K562 (cell line): ENCODE measurements at regions of chr3 and their contacts with region 1.

Region 1: GRCh38 chr3:182490596-182491491 is 302.5 kb upstream of the ATP11B start:
- DNase-seq: peak in 3 of 4 experiments; percentile 11 to 47 (median 20)
- ATAC-seq: peak; percentile 77
- H3K4me3 ChIP-seq: no peak overlapping the region
- H3K27ac ChIP-seq: no peak overlapping the region
- H3K4me1 ChIP-seq: no peaks in the 10 kb centered on the region
- H3K27me3 ChIP-seq: no peaks in the 10 kb centered on the region
- CTCF ChIP-seq: peak; percentile 39 to 54 (median 45); a peak in 4 of 6 replicates
- EP300 ChIP-seq: no peak
- POLR2A ChIP-seq: no peak
- RAD21 ChIP-seq: peak; percentile 66 to 77

Region 2: DNA sequence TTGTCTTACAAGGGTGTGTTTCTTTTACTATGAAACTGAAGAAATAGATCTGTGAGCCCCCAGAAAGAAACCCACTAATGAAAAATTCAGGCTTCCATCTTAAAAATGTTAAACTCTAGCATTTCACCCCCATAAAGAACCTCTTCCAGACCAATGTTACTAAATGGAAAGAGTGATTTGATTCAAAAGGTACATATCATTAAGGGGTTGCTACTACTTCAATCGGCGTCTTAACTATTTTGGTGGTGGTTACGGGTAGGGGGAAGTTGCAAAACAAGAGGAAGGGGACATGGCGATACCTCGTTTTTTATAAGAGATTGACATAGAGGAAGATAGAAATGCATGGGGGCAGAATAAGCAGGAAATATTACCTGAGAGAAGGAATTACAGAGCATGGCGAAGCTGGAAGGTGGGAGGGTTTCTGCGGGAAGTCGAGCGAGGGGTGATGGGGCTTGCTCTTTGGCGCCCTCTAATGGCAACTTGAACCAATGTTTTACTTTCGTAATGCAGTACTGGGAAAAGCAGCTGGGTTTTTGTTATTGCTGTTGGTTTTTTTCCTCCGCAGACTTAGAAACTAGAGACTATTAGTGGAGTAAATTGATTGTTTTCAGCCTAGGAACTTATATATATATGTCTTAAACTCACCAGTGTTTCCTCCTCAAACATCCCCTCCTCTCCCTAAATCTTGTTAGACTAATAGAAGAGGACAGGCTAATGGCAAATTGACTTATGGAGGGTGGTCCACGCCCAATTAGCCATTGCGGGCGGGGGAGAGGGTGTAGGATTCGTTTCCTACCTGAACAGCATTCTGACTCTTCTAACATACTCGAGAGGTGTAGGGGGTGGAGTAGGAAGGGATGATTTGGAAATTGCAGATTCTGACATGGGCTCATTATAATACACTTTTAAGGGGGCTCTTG is 790.4 kb before region 1 on chr3:
- CTCF ChIA-PET with region 1: no interaction called
- POLR2A ChIA-PET with region 1: no interaction called
- in situ Hi-C with region 1: no loop called
- intact Hi-C with region 1: loop called (anchors 10 kb)
- DNase-seq: peak; percentile 72 to 75 (median 73)
- ATAC-seq: peak; percentile 88
- H3K4me3 ChIP-seq: no peak overlapping the region
- H3K27ac ChIP-seq: no peak overlapping the region
- H3K4me1 ChIP-seq: peaks cover 0 to 13% of the 10 kb centered on the region in 2 experiments; a peak in 2 of 5 replicates
- H3K27me3 ChIP-seq: peaks cover 11 to 27% of the 10 kb centered on the region in 2 experiments; a peak in 4 of 5 replicates
- CTCF ChIP-seq: peak; percentile 74 to 80 (median 77)
- EP300 ChIP-seq: no peak
- POLR2A ChIP-seq: no peak
- RAD21 ChIP-seq: peak; percentile 32 to 54; a peak in 3 of 4 replicates

Region 3: GRCh38 chr3:182248351-182248880 is 242.4 kb before region 1 on chr3:
- CTCF ChIA-PET with region 1: no interaction called
- POLR2A ChIA-PET with region 1: no interaction called
- in situ Hi-C with region 1: no loop called
- intact Hi-C with region 1: loop called (anchors 5 kb)
- DNase-seq: peak; percentile 20 to 37 (median 33)
- ATAC-seq: peak; percentile 69
- H3K4me3 ChIP-seq: no peak overlapping the region
- H3K27ac ChIP-seq: no peak overlapping the region
- H3K4me1 ChIP-seq: no peaks in the 10 kb centered on the region
- H3K27me3 ChIP-seq: no peaks in the 10 kb centered on the region; a peak in 1 of 5 replicates
- CTCF ChIP-seq: peak; percentile 7 to 41 (median 21); a peak in 3 of 6 replicates
- EP300 ChIP-seq: no peak
- POLR2A ChIP-seq: no peak
- RAD21 ChIP-seq: peak in 1 of 2 experiments; percentile 40; a peak in 1 of 4 replicates

Region 4: DNA sequence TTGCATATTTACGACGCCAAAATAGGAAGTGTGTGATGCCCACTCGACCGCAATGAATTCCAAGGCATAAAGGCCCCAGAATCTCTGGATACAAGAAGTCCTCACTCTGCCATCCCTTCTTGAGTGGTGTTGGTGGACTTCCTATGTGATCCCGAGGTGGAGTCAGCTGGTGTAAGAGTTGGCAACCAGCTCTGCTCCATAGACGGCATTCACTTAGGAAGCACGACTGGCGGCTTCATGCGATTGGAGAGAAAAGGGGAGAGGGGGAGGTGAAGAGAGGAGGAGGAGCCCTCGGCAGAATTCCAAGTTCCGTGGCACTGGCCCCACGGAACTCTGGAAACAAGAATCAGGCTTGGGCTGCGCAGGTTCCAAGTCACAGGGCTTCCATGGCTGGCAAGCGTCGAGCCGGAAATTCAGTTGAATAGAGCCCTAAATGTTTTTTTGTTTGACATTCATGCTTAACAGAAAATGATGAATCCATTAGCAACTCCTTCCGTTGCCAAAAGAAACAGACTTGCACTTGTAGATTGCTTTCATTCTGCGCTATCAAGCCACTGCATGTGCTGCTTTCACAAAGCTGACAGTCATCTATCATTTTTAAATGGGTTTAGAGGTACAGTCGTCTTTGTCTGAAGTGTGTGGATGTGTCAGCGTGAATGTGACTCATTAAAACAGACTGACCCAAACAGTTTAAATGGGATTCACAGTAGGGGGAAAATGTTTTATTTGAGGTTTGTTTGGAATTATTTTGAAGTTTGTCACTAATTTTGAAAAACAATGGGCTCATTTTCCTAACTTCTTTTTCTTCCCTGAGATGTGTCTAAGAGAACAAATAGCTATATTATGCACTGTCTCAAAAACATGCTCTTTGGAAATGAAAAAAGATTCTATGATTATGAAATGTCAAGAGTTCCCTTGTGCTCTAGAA is 125.9 kb before region 1 on chr3:
- CTCF ChIA-PET with region 1: no interaction called
- POLR2A ChIA-PET with region 1: no interaction called
- in situ Hi-C with region 1: no loop called
- intact Hi-C with region 1: loop called (anchors 10 kb)
- DNase-seq: peak; percentile 54 to 91 (median 67)
- ATAC-seq: peak; percentile 94
- H3K4me3 ChIP-seq: peak overlapping the region; percentile 26
- H3K27ac ChIP-seq: peak overlapping the region; percentile 99
- H3K4me1 ChIP-seq: peaks cover 8 to 28% of the 10 kb centered on the region in 2 experiments; a peak in 4 of 5 replicates
- H3K27me3 ChIP-seq: no peaks in the 10 kb centered on the region
- CTCF ChIP-seq: no peak; a peak in 1 of 6 replicates
- EP300 ChIP-seq: peak; percentile 97
- POLR2A ChIP-seq: 0 out of 2 replicates have a peak, but pooled peaks have one; percentile 47
- RAD21 ChIP-seq: no peak

Region 5: DNA sequence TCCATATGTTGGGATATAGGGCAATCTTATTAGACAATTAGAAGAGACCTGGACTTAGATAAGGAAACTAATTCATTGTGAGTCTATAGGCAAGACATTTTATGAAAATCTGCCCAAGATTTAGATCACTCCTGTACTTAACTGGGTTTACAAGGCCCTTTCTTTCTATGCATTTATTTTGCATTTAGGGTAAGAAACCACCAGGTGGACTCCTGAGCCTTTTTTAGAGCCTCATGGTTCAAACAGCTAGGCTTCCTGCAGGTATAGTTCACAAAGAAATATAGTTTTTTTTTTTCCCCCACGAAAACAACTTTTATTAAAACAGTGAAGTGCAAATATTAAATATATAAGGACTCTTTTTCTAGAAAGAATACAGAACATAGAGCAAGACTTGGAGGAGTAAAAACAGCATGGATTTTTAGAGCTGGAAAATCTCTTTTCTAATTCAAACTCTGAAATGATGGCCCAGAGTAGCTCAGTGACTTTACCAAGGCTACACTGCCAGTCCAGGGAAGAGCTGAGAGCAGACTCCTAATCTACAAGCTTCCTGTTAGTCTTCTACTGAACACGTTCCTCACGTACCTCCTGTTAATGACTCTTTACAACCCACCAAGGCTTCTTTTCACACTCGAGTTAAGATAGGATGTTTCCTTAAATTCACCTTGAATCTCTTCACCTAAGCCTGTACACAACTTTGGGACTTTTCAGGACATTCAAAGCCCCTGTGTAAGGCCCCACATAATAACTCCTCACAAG is 98.5 kb before region 1 on chr3:
- CTCF ChIA-PET with region 1: interaction called, 6 read pairs
- POLR2A ChIA-PET with region 1: no interaction called
- in situ Hi-C with region 1: no loop called
- intact Hi-C with region 1: loop called (anchors 1 kb)
- DNase-seq: peak in 2 of 4 experiments; percentile 14 to 16
- ATAC-seq: peak; percentile 67
- H3K4me3 ChIP-seq: no peak overlapping the region
- H3K27ac ChIP-seq: peak overlapping the region; percentile 67; the same call in 2 of the 3 replicates
- H3K4me1 ChIP-seq: peaks cover 2 to 24% of the 10 kb centered on the region in 2 experiments; a peak in 3 of 5 replicates
- H3K27me3 ChIP-seq: no peaks in the 10 kb centered on the region
- CTCF ChIP-seq: peak in 2 of 3 experiments; percentile 24 to 50; a peak in 2 of 6 replicates
- EP300 ChIP-seq: no peak
- POLR2A ChIP-seq: no peak
- RAD21 ChIP-seq: peak; percentile 36 to 55

Region 6: DNA sequence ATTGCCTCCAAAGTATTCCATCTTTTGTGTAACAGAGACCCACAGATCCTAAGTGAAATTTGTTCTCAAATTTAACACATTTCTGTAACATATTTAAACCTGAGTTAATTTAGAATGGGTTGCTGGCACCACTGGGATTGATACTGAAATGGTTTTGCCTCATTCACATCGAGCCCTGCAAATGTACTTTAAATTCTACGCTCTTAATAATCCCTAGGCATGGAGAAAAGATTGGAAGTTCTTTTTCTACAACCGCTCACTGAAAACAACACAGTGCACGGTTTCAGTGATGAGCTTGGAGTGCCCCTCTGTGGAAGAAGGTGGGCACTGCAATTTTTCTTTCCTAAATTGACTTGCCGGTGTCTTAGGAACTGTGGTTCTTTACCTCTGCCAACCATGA is 192.6 kb after region 1 on chr3:
- CTCF ChIA-PET with region 1: no interaction called
- POLR2A ChIA-PET with region 1: no interaction called
- in situ Hi-C with region 1: no loop called
- intact Hi-C with region 1: loop called (anchors 5 kb)
- DNase-seq: peak; percentile 67 to 79 (median 69)
- ATAC-seq: peak; percentile 84
- H3K4me3 ChIP-seq: no peak overlapping the region
- H3K27ac ChIP-seq: no peak overlapping the region
- H3K4me1 ChIP-seq: peaks cover 0 to 10% of the 10 kb centered on the region in 2 experiments; a peak in 2 of 5 replicates
- H3K27me3 ChIP-seq: 0 out of 5 replicates have a peak, but pooled peaks cover 0 to 4% of the 10 kb centered on the region in 2 experiments
- CTCF ChIP-seq: peak; percentile 81 to 96 (median 91)
- EP300 ChIP-seq: no peak
- POLR2A ChIP-seq: no peak
- RAD21 ChIP-seq: peak; percentile 85 to 93